Right ventricle myocardium inferior (tissue), 1 donor: ENCODE measurements at regions of chr16 and their contacts with region 1.

Region 1: GRCh38 chr16:49350265-49351095 is 23.1 kb upstream of the C16orf78 start:
- DNase-seq: no peak
- ATAC-seq: no peak

Region 2: GRCh38 chr16:48687421-48688038 is 663.0 kb before region 1 on chr16:
- intact Hi-C with region 1: loop called (anchors 1 kb)
- DNase-seq: peak; percentile 74
- ATAC-seq: peak; percentile 81

Region 3: GRCh38 chr16:48911700-48912099 is 438.8 kb before region 1 on chr16:
- intact Hi-C with region 1: loop called (anchors 10 kb)
- DNase-seq: no peak
- ATAC-seq: no peak

Region 4: GRCh38 chr16:49183911-49184310 is 166.6 kb before region 1 on chr16:
- intact Hi-C with region 1: loop called (anchors 10 kb)
- DNase-seq: no peak
- ATAC-seq: no peak

Region 5: GRCh38 chr16:49292413-49292812 is 58.1 kb before region 1 on chr16:
- intact Hi-C with region 1: no loop called
- DNase-seq: no peak
- ATAC-seq: no peak